Mammary epithelial cell (primary cell): ENCODE measurements at regions of chr4 and their contacts with region 1.

Region 1: GRCh38 chr4:188976644-188977115 is 837.4 kb downstream of the TRIML1 start:
- DNase-seq: peak; percentile 58
- H3K4me3 ChIP-seq: no peak overlapping the region
- H3K27ac ChIP-seq: no peak overlapping the region
- H3K4me1 ChIP-seq: peaks cover 9% of the 10 kb centered on the region
- H3K27me3 ChIP-seq: no peaks in the 10 kb centered on the region
- CTCF ChIP-seq: no peak

Region 2: DNA sequence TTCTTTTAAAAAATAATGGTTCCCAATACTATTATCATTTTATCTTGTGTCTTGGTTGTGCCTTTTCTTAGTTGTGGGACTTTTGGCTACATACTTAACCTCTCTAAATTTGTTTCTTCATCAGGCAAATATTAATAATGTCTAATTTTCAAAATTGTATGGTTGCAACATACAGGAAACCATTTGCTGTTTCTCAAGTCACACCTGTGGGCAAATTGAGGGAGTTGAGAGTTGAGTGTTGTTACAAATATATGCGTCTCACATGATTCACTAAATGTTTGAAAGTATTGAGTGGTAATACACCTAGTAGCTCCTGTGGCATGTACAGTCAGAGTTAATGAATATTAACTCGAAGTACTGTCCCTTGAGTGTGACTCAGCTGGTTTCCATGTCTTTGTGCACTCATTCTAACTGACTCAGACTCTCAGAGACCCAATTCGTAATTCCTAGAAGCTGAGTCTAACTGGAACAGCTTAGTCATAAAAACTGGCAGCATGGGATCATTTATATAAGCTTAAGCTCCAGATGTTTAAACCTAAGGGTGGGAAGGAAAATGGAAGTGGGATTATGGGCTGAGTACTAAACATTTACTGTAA is 35.1 kb before region 1 on chr4:
- CTCF ChIA-PET with region 1: no interaction called
- dilution Hi-C with region 1: loop called (anchors 5 kb)
- in situ Hi-C with region 1: no loop called
- intact Hi-C with region 1: no loop called
- DNase-seq: peak; percentile 99
- H3K4me3 ChIP-seq: no peak overlapping the region
- H3K27ac ChIP-seq: peak overlapping the region; percentile 88
- H3K4me1 ChIP-seq: peaks cover 17% of the 10 kb centered on the region
- H3K27me3 ChIP-seq: no peaks in the 10 kb centered on the region
- CTCF ChIP-seq: no peak

Region 3: DNA sequence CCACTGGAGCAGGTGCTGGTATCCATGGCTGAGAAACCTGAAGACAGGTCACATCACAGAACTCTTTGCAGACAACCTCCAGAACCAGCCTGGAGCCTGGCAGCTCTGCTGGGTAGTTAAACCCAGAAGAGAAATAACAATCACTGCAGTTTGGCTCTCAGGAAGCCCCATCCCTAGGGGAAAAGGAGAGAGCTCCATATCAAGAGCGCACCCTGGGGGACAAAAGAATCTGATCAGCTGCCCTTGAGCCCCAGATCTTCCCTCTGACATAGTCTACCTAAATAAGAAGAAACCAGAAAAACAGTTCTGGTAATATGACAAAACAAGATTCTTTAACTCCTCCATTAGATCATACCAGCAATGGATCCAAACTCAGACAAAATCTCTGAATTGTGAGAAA is 140.7 kb after region 1 on chr4:
- CTCF ChIA-PET with region 1: no interaction called
- dilution Hi-C with region 1: no loop called
- in situ Hi-C with region 1: no loop called
- intact Hi-C with region 1: no loop called
- DNase-seq: no peak
- H3K4me3 ChIP-seq: no peak overlapping the region
- H3K27ac ChIP-seq: no peak overlapping the region
- H3K4me1 ChIP-seq: no peaks in the 10 kb centered on the region
- H3K27me3 ChIP-seq: no peaks in the 10 kb centered on the region
- CTCF ChIP-seq: no peak